HepG2 (cell line): ENCODE measurements at regions of chr20 and their contacts with region 1.

Region 1: DNA sequence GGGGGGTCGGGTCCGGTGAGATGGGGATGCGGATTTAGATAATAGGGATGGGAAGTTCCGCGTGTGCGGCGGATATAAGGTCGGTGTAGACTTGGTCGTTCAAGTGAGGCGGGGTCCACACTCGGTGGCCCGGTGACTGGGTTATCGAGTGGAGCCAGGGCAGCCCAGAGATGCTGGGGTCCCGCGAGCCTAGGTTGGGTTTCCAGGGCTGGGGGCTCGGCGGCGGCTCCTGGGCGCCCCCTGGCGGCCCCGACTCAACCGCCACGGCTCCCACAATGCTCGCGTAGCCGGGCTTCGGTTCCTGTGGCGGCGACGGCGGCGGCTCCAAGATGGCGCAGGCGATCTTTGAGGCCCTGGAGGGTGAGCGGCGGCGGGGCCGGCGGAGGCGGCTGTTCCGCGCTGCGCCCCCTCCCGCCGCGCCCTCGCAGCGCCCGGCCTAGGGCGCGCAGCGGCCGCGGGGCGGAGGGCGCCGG is at the start of gene ZNF341:
- DNase-seq: peak; percentile 90
- ATAC-seq: peak; percentile 76
- H3K4me3 ChIP-seq: peak within 1 kb of the TSS; percentile 60 to 81 (median 65)
- H3K27ac ChIP-seq: peak within 1 kb of the TSS; percentile 84
- H3K4me1 ChIP-seq: peaks cover 34% of the 10 kb centered on the region
- H3K27me3 ChIP-seq: no peaks in the 10 kb centered on the region
- CTCF ChIP-seq: peak; percentile 96
- EP300 ChIP-seq: peak in 1 of 2 experiments; percentile 80; a peak in 2 of 4 replicates
- POLR2A ChIP-seq: no peak
- RAD21 ChIP-seq: peak; percentile 99
- total RNA-seq, gene ZNF341: 0.97 and 1.1 TPM in 2 replicates

Region 2: DNA sequence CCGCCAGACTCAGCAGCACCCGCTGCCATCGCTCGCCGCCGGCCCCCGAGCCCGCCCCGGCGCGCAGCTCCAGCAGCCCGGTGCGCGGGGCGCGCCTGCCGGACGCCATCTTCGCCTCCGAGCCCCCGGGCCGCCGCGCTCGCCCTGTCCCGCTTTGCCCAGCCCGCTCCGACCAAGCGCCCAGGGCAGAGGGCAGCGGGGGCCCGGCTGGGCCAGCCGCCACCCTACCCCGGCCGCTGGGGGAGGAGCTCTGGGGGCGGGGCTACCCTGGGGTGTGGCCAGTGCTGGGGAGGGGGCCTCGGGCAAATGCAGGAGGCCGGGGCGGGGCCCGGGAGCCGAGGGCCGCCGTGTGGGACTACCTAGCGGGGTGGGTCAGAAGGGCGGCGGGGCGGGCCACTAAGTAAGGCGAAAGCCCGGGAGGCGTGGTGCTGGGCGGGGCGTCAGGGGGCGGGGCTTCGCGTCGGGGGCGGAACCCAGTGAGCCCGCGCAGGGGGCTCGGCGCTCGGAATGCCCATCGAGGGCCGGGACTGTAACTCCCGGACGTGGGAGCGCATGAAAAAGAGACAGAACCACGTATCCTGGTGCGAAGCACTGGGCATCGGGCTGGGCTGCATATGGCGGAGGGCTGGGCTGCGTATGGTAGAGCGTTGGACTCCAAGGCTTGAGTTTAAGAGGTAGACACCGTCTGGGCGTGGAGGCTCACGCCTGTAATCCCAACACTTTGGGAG is 288.1 kb before region 1 on chr20 and contains the start of gene SNTA1:
- CTCF ChIA-PET with region 1: no interaction called
- POLR2A ChIA-PET with region 1: interaction called, 7 read pairs
- in situ Hi-C with region 1: no loop called
- intact Hi-C with region 1: loop called (anchors 10 kb)
- DNase-seq: peak; percentile 92
- ATAC-seq: peak; percentile 85
- H3K4me3 ChIP-seq: peak within 1 kb of the TSS; percentile 64 to 95 (median 72)
- H3K27ac ChIP-seq: peak within 1 kb of the TSS; percentile 45
- H3K4me1 ChIP-seq: peaks cover 54% of the 10 kb centered on the region
- H3K27me3 ChIP-seq: peaks cover 0 to 10% of the 10 kb centered on the region in 2 experiments; a peak in 2 of 5 replicates
- CTCF ChIP-seq: no peak
- EP300 ChIP-seq: 0 out of 4 replicates have a peak, but pooled peaks of 1 of the 2 experiments have one; percentile 7
- POLR2A ChIP-seq: no peak; a peak in 1 of 4 replicates
- RAD21 ChIP-seq: peak; percentile 84
- total RNA-seq, gene SNTA1: 14.8 and 16.4 TPM in 2 replicates

Region 3: DNA sequence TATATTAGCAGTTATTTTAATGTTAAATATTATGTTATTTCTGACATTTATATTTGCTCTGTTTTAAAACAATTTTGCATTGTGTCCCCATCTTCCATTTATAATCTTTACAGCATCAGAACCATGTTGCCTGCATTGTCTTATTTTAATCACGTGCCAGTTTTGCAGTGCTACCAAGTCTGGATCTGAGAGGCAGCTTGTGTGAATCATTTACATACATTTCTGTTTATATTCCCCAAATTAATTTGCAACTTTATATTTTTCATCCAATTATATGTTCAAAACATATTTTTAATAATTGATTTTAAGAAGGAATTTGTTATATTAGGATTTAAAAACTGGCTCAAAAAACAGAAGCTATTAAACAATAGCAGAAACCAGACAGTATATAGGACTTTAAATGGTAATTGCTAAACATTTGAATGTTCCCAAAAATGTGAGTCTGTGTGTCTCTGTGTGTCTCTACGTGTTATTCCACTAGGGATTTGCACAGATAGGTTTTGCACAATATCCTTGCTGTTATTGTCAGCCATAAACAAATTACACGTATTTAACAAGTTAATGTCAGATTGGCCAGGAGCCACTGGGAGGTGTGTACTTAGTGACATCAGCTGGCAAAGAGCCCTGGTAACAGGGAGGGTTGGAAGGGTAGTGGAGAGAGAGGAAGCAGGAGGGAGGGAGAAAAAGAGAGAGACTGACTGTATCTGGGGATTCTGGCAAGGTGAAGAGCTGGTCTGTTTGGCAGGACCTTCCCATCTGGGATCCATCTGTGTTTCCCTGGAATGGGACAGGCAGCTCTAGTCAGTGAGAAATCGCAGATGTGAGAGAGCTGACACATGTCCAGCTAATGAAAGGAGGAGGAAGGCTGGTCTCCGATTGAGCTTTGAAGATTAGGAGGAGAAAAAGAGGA is 169.8 kb before region 1 on chr20:
- CTCF ChIA-PET with region 1: no interaction called
- POLR2A ChIA-PET with region 1: no interaction called
- in situ Hi-C with region 1: no loop called
- intact Hi-C with region 1: no loop called
- DNase-seq: peak; percentile 93
- ATAC-seq: peak; percentile 91
- H3K4me3 ChIP-seq: no peak overlapping the region
- H3K27ac ChIP-seq: peak overlapping the region; percentile 15
- H3K4me1 ChIP-seq: peaks cover 57% of the 10 kb centered on the region
- H3K27me3 ChIP-seq: no peaks in the 10 kb centered on the region
- CTCF ChIP-seq: peak; percentile 50
- EP300 ChIP-seq: peak in 1 of 2 experiments; percentile 63; a peak in 2 of 4 replicates
- POLR2A ChIP-seq: no peak
- RAD21 ChIP-seq: peak; percentile 44; the same call in 1 of the 2 replicates

Region 4: GRCh38 chr20:33644785-33645352 is 86.9 kb before region 1 on chr20:
- CTCF ChIA-PET with region 1: no interaction called
- POLR2A ChIA-PET with region 1: no interaction called
- in situ Hi-C with region 1: no loop called
- intact Hi-C with region 1: no loop called
- DNase-seq: no peak
- ATAC-seq: no peak
- H3K4me3 ChIP-seq: no peak overlapping the region
- H3K27ac ChIP-seq: no peak overlapping the region
- H3K4me1 ChIP-seq: peaks cover 3% of the 10 kb centered on the region; the same call in 1 of the 2 replicates
- H3K27me3 ChIP-seq: no peaks in the 10 kb centered on the region
- CTCF ChIP-seq: no peak
- EP300 ChIP-seq: no peak
- POLR2A ChIP-seq: no peak
- RAD21 ChIP-seq: no peak

Region 5: GRCh38 chr20:33674295-33675135 is 57.2 kb before region 1 on chr20 and contains the start of gene NECAB3:
- CTCF ChIA-PET with region 1: interaction called, 3 read pairs
- POLR2A ChIA-PET with region 1: interaction called, 4 read pairs
- in situ Hi-C with region 1: no loop called
- intact Hi-C with region 1: loop called (anchors 5 kb)
- DNase-seq: peak; percentile 82
- ATAC-seq: peak; percentile 81
- H3K4me3 ChIP-seq: peak within 1 kb of the TSS; percentile 81 to 96 (median 96)
- H3K27ac ChIP-seq: peak within 1 kb of the TSS; percentile 81
- H3K4me1 ChIP-seq: peaks cover 51% of the 10 kb centered on the region
- H3K27me3 ChIP-seq: peaks cover 0 to 3% of the 10 kb centered on the region in 2 experiments; a peak in 1 of 5 replicates
- CTCF ChIP-seq: peak; percentile 57
- EP300 ChIP-seq: 0 out of 4 replicates have a peak, but pooled peaks of 1 of the 2 experiments have one; percentile 18
- POLR2A ChIP-seq: peak; percentile 68 to 92
- RAD21 ChIP-seq: peak; percentile 80
- total RNA-seq, gene NECAB3: 26.4 and 61.5 TPM in 2 replicates